Heart left ventricle (tissue), 16 donors: ENCODE measurements at regions of chr1 and their contacts with region 1.

Region 1: GRCh38 chr1:226248091-226248490 is 24.6 kb downstream of the MIXL1 start:
- DNase-seq: no peak
- ATAC-seq: no peak
- H3K4me3 ChIP-seq: no peak overlapping the region
- H3K27ac ChIP-seq: peak overlapping the region in 1 of 12 donors; percentile 3
- H3K4me1 ChIP-seq: peaks cover 0 to 13% (median 0%) of the 10 kb centered on the region in 12 donors
- H3K27me3 ChIP-seq: no peaks in the 10 kb centered on the region
- CTCF ChIP-seq: no peak
- POLR2A ChIP-seq: no peak

Region 2: GRCh38 chr1:226157761-226158316 is 90.3 kb before region 1 on chr1:
- intact Hi-C with region 1: no loop called
- DNase-seq: no peak
- ATAC-seq: no peak
- H3K4me3 ChIP-seq: no peak overlapping the region
- H3K27ac ChIP-seq: peak overlapping the region in 1 of 12 donors; percentile 33
- H3K4me1 ChIP-seq: peaks cover 0 to 16% (median 0%) of the 10 kb centered on the region in 12 donors
- H3K27me3 ChIP-seq: no peaks in the 10 kb centered on the region
- CTCF ChIP-seq: no peak
- POLR2A ChIP-seq: no peak

Region 3: DNA sequence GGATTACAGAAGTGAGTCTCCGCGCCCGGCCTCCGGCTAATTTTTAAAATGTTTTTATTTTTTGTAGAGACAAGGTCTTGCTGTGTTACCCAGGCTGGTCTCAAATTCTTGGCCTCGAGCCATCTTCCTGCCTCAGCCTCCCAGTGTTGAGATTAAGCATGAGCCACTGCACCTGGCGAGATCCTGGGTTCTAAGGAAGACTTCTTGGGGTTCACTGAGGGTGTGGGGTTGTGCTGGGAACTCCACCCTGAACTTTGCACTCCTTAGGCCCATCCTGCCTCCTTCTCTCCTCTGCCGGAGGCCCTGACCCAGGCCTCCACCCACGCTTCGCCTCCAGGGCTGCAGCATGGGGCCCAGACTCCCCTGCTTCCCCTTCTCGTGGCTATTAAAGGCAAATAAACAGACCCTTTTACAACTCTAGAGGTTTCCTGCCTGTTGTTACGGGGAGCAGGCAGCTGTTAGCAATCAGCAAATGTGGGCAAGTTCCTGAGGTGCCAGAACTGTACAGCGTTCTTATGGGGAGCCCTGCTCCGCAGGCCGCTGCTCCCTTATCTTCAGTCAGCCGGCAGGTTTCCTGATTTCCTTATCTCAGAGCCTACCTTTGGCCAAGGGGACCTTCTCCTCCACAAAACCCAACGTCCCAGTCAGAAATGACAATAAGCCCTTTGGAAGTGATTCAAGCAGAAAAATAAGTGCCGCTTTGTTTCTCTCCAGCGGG is 101.9 kb after region 1 on chr1:
- intact Hi-C with region 1: loop called in 1 of 10 experiments (anchors 10 kb)
- DNase-seq: no peak
- ATAC-seq: no peak
- H3K4me3 ChIP-seq: no peak overlapping the region
- H3K27ac ChIP-seq: no peak overlapping the region
- H3K4me1 ChIP-seq: peaks cover 0 to 30% (median 14%) of the 10 kb centered on the region in 12 donors
- H3K27me3 ChIP-seq: no peaks in the 10 kb centered on the region
- CTCF ChIP-seq: no peak
- POLR2A ChIP-seq: no peak